ENCODE measurements at regions of chr7 and their contacts with region 1.

Region 1: GRCh38 chr7:128739048-128739962 is at the start of gene CALU:
- DNase-seq: peak; percentile 96
- H3K4me3 Mint-ChIP-seq: peak within 1 kb of the TSS; percentile 99
- H3K27ac Mint-ChIP-seq: peak within 1 kb of the TSS; percentile 97
- H3K4me1 Mint-ChIP-seq: peaks cover 40% of the 10 kb centered on the region
- H3K27me3 Mint-ChIP-seq: peaks cover 5% of the 10 kb centered on the region
- total RNA-seq, gene CALU: 34.3 to 36.3 TPM

Region 2: GRCh38 chr7:128728598-128728997 is 10.7 kb before region 1 on chr7:
- CTCF ChIA-PET with region 1: no interaction called
- POLR2A ChIA-PET with region 1: interaction called, 19 read pairs
- DNase-seq: no peak
- H3K4me3 Mint-ChIP-seq: no peak overlapping the region
- H3K27ac Mint-ChIP-seq: no peak overlapping the region
- H3K4me1 Mint-ChIP-seq: no peaks in the 10 kb centered on the region
- H3K27me3 Mint-ChIP-seq: peaks cover 30% of the 10 kb centered on the region

Region 3: DNA sequence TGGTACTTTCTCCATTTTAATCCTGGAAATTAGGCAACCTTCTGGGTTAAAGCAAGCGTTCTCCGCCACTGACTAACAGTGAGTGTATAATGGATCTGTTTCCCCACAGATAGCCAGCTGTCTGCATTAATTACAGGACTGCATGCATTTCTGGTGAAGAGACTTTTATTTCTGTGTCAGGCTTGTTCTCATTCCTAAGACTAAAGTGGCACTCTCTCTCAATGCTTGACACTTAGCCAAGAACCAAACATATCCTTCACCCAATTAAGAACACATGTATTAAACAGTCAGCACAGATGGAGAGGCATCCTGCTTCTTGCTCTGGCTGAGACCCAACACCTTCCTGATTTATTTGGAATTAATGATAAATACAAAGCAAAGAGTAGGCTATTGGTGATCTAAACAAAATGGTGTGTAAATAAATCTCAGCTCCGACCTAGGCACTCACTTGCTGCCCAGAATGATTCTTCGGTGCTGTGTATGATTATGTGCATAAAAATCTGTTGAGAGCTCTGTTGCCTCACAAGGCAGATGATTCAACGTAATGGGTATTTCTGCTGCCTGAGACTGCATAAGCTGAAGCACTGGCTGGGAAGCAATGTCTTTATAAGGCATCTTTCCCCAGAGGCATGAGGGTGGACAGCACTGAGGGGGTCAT is 16.6 kb after region 1 on chr7:
- CTCF ChIA-PET with region 1: interaction called, 5 read pairs
- POLR2A ChIA-PET with region 1: interaction called, 11 read pairs
- DNase-seq: no peak
- H3K4me3 Mint-ChIP-seq: no peak overlapping the region
- H3K27ac Mint-ChIP-seq: no peak overlapping the region
- H3K4me1 Mint-ChIP-seq: no peaks in the 10 kb centered on the region
- H3K27me3 Mint-ChIP-seq: no peaks in the 10 kb centered on the region

Measured in activated CD4-positive, alpha-beta memory T cell treated with anti-CD3 and anti-CD28 coated beads, Interleukin-2, amount 10 ng/mL, durations not matched to agents 7 days and 5 days (primary cell).